Right ventricle myocardium inferior (tissue), 1 donor: ENCODE measurements at regions of chr3 and their contacts with region 1.

Region 1: DNA sequence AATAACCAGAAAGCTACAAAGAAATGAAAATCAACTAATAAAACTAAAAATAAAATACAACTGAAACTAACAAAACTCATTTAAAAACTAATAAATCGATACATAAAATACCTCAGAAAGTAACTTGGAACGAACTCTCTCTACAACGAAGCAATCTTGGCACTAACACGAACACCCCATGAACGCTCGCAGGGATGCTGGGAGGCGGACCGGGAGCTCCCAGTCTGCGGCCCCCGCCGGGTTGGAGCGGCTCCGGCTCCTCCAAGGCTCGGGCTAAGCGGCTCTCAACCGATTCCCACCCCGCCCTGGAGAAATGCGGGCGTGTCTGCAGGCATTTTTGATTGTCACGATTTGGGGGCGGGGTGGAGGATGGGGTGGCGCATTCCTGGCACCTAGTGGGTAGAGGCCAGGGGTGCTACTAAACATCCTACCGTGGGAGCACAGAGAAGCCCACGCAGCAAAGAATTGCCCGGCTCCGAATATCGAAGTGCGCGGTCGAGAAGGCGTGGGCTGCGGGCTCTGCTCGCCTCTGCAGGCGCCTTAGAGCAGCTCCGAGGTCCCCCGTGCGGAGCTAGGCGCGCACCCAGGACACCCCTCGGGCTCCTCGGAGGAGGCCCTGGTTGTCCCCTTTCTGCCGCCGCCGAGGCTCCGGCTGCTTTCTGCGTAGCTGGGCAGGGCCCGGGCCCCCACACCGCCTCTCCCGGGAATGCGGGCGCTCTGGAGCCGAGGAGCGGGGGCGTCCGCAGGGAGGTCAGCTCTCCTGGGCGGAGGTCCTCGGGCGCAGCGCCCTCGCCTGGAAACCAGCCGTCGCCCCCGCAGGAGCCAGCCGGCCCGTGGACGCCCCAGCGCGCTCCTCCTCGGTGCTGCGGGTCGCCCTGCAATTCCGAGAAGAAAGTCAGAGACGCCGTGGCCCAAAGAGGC is 16.4 kb upstream of the LAMP3 start:
- DNase-seq: peak; percentile 69
- ATAC-seq: peak; percentile 57

Region 2: GRCh38 chr3:183122257-183122932 is 56.5 kb before region 1 on chr3:
- intact Hi-C with region 1: loop called (anchors 5 kb)
- DNase-seq: no peak
- ATAC-seq: no peak

Region 3: GRCh38 chr3:183513046-183513706 is 334.3 kb after region 1 on chr3:
- intact Hi-C with region 1: no loop called
- DNase-seq: no peak
- ATAC-seq: no peak